ENCODE measurements at regions of chr9 and their contacts with region 1.

Region 1: DNA sequence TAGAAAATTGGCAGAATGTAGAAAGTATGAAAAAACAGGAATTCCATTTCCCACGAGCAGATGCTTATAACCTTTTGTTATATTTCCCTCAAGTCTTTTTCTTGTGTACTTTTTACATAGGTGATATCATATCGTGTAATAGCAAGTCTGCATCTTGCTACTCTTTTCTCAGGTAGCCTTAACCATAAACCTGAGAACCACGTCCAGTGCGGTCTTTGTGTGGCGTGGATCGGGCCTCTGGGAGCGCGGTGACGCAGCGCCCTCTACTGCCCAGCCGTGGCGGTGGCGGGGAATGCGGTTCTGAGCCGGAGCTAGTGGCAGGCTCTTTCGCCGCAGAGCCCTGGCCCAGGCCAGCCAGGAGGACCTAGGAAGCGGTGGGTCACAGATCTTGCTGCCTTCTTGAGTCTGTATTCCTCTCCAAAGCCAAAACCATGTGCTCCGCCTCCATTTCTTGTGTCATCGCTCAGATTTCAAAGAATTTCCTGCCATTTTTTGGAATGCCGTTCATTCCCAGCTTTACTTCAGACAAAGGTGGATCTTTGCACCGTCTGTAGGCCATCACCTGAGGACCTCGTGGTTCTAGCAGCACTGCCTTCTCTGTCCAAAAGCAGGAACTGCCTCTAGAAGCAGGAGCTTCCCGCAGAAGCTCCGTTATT is 71.9 kb downstream of the MVB12B start:
- DNase-seq: peak; percentile 56 to 73 (median 57)
- H3K4me3 ChIP-seq: no peak overlapping the region
- H3K4me3 Mint-ChIP-seq: peak overlapping the region in 7 of 8 donors; percentile 24 to 73 (median 67)
- H3K27ac ChIP-seq: no peak overlapping the region
- H3K27ac Mint-ChIP-seq: peak overlapping the region in 6 of 7 donors; percentile 46 to 86 (median 64)
- H3K4me1 ChIP-seq: peaks cover 30% of the 10 kb centered on the region
- H3K4me1 Mint-ChIP-seq: peaks cover 23 to 44% (median 37%) of the 10 kb centered on the region in 4 donors
- H3K27me3 ChIP-seq: no peaks in the 10 kb centered on the region
- H3K27me3 Mint-ChIP-seq: no peaks in the 10 kb centered on the region

Region 2: DNA sequence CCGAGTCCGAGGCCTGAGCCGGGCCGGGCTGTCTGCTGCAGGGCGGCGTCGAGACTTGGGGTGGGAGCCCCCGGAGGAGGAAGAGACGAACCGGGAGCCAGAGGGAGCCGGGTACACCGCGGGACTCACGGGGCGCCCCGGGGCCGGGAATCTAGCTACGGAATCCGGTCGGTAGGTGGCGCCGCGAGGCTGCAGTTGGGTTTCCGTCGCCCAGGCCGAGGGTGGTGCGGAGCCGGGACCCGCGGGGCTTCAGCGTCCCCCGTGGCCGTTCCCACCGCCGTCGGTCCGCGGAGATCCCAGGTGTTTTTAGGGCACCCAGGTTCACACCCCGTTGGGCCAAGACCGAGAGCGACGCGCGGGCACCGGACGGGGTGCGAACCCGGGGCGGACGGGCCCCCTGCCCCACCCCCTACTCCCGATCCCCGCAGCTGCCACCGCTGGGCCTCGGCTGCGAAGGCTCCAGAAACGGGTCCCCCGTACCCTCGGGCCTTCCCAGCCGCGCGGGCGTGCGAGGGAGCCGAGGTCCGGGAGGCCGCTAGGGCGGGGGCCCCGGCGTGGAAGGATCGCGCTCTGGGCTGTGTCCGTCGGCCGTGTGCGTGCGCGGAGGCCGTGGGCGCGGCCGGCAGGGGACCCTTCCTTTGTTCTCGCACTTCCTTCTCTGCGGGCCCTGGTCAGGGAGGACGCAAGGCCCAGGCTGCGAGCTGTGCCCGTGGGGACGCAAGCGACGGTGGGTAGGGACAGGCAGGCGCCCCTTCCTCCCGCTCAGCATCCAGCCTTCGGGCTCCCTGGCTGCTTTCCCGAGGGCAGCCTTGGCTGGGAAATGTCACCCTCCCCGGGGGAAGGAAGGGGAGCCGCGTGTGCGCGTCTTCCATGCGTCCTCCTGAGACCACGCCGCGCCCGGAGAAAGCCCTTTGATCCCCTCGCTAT is 990.3 kb before region 1 on chr9:
- CTCF ChIA-PET with region 1: interaction called, 6 read pairs
- POLR2A ChIA-PET with region 1: no interaction called
- intact Hi-C with region 1: loop called (anchors 1 kb)
- DNase-seq: peak; percentile 61 to 68 (median 65)
- H3K4me3 ChIP-seq: peak overlapping the region in 1 of 2 donors; percentile 35
- H3K4me3 Mint-ChIP-seq: peak overlapping the region; percentile 57 to 82 (median 73)
- H3K27ac ChIP-seq: no peak overlapping the region
- H3K27ac Mint-ChIP-seq: no peak overlapping the region
- H3K4me1 ChIP-seq: peaks cover 9% of the 10 kb centered on the region
- H3K4me1 Mint-ChIP-seq: peaks cover 4 to 12% (median 10%) of the 10 kb centered on the region in 4 donors
- H3K27me3 ChIP-seq: no peaks in the 10 kb centered on the region
- H3K27me3 Mint-ChIP-seq: peaks cover 7 to 27% of the 10 kb centered on the region in 2 donors

Region 3: GRCh38 chr9:126301985-126302603 is 96.4 kb before region 1 on chr9:
- CTCF ChIA-PET with region 1: interaction called, 28 read pairs
- POLR2A ChIA-PET with region 1: no interaction called
- intact Hi-C with region 1: loop called (anchors 1 kb)
- DNase-seq: peak; percentile 54 to 70 (median 56)
- H3K4me3 ChIP-seq: no peak overlapping the region
- H3K4me3 Mint-ChIP-seq: no peak overlapping the region
- H3K27ac ChIP-seq: no peak overlapping the region
- H3K27ac Mint-ChIP-seq: peak overlapping the region in 2 of 7 donors; percentile 9 to 11
- H3K4me1 ChIP-seq: no peaks in the 10 kb centered on the region
- H3K4me1 Mint-ChIP-seq: peaks cover 2 to 5% (median 4%) of the 10 kb centered on the region in 4 donors
- H3K27me3 ChIP-seq: no peaks in the 10 kb centered on the region
- H3K27me3 Mint-ChIP-seq: no peaks in the 10 kb centered on the region

Region 4: GRCh38 chr9:126326228-126327005 is 72.1 kb before region 1 on chr9 and contains the start of gene MVB12B:
- CTCF ChIA-PET with region 1: interaction called, 12 read pairs
- POLR2A ChIA-PET with region 1: no interaction called
- intact Hi-C with region 1: no loop called
- DNase-seq: peak; percentile 59 to 66 (median 61)
- H3K4me3 ChIP-seq: peak within 1 kb of the TSS in 1 of 2 donors; percentile 55
- H3K4me3 Mint-ChIP-seq: peak within 1 kb of the TSS; percentile 84 to 93 (median 86)
- H3K27ac ChIP-seq: peak within 1 kb of the TSS; percentile 50
- H3K27ac Mint-ChIP-seq: peak within 1 kb of the TSS; percentile 80 to 94 (median 88)
- H3K4me1 ChIP-seq: peaks cover 35% of the 10 kb centered on the region
- H3K4me1 Mint-ChIP-seq: peaks cover 27 to 42% (median 35%) of the 10 kb centered on the region in 4 donors
- H3K27me3 ChIP-seq: no peaks in the 10 kb centered on the region
- H3K27me3 Mint-ChIP-seq: no peaks in the 10 kb centered on the region
- total RNA-seq, gene MVB12B: 6.0 to 6.5 TPM

Region 5: DNA sequence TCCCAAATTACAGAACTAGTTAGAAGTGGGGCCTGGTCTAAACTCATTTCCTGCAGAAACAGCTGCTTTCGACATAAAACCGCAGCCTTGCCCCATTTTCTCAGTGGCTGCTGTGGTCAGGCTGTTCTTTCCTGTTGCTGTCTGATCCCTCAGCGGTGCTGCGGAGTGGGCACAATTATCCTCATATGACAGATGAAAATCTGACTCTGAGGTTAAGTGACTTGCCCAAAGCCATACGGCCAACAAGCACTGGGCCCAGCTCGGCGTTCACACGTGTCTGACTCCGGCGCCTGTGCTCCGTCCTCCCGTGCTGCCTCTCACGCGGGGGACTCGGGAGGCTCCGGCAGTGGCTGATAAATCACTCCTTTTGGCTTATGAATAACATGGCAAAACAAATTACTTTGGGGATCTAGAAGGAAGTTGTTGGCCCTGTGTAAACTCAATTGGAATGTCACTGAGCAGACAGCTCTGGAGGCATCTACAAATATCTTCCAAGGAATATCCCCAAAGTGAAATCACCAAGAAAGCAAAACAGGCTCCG is 72.6 kb after region 1 on chr9:
- CTCF ChIA-PET with region 1: interaction called, 24 read pairs
- POLR2A ChIA-PET with region 1: interaction called, 13 read pairs
- intact Hi-C with region 1: loop called (anchors 5 kb)
- DNase-seq: peak; percentile 82 to 88 (median 85)
- H3K4me3 ChIP-seq: peak overlapping the region in 1 of 2 donors; percentile 27
- H3K4me3 Mint-ChIP-seq: peak overlapping the region; percentile 73 to 87 (median 80)
- H3K27ac ChIP-seq: peak overlapping the region; percentile 57
- H3K27ac Mint-ChIP-seq: peak overlapping the region; percentile 92 to 98 (median 96)
- H3K4me1 ChIP-seq: peaks cover 70% of the 10 kb centered on the region
- H3K4me1 Mint-ChIP-seq: peaks cover 62 to 90% (median 76%) of the 10 kb centered on the region in 4 donors
- H3K27me3 ChIP-seq: no peaks in the 10 kb centered on the region
- H3K27me3 Mint-ChIP-seq: no peaks in the 10 kb centered on the region

Measured in CD4-positive, alpha-beta memory T cell (primary cell).